ENCODE measurements at regions of chr12 and their contacts with region 1.

Region 1: GRCh38 chr12:105801351-105801750 is 337.4 kb downstream of the NUAK1 start:
- DNase-seq: no peak
- ATAC-seq: no peak
- H3K4me3 ChIP-seq: no peak overlapping the region
- H3K27ac ChIP-seq: no peak overlapping the region
- H3K4me1 ChIP-seq: no peaks in the 10 kb centered on the region
- H3K27me3 ChIP-seq: no peaks in the 10 kb centered on the region
- CTCF ChIP-seq: no peak

Region 2: DNA sequence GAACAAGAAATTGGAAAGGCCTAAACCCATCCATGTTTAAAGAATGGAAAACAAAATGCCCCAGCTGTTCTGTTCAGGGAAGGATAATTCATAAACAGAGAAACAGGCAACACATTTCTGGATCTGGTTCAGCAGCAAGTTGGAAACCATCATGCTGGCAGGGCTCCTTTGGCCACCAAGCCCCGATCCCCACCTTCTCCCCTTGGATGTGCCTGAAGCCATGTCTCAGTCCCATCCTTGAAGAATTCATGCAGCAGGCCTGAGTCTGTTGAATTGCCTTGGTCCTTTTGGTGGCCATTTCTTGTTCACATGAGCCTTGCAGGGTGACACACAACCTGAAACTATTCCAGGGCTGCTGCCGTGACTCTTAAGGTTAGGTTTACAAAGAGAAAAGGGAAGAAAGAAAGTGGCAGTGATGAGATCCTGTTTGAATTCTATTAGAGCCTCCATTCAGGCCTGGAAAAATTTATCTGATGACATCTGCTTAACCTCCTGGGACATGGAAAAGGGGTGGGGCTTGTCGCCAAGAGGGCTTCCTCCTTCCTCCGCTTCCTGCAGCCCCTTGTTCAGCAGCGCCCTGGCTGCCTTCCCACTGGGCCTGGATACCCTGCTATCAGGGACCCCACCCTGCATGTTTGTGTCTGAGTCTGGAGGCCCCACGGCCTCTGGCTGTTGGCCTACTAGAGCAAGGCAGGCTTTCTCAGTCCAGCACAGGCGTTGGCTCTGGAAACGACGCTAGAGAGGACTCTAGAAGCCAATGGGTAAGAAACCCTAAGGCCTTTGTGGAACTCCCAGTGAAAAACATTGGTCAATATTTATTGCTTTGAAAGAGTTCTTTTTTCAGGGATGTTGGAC is 129.0 kb before region 1 on chr12:
- CTCF ChIA-PET with region 1: no interaction called
- POLR2A ChIA-PET with region 1: interaction called, 12 read pairs
- in situ Hi-C with region 1: no loop called
- intact Hi-C with region 1: no loop called
- DNase-seq: no peak
- ATAC-seq: no peak
- H3K4me3 ChIP-seq: no peak overlapping the region
- H3K27ac ChIP-seq: no peak overlapping the region
- H3K4me1 ChIP-seq: no peaks in the 10 kb centered on the region
- H3K27me3 ChIP-seq: no peaks in the 10 kb centered on the region
- CTCF ChIP-seq: no peak

Region 3: DNA sequence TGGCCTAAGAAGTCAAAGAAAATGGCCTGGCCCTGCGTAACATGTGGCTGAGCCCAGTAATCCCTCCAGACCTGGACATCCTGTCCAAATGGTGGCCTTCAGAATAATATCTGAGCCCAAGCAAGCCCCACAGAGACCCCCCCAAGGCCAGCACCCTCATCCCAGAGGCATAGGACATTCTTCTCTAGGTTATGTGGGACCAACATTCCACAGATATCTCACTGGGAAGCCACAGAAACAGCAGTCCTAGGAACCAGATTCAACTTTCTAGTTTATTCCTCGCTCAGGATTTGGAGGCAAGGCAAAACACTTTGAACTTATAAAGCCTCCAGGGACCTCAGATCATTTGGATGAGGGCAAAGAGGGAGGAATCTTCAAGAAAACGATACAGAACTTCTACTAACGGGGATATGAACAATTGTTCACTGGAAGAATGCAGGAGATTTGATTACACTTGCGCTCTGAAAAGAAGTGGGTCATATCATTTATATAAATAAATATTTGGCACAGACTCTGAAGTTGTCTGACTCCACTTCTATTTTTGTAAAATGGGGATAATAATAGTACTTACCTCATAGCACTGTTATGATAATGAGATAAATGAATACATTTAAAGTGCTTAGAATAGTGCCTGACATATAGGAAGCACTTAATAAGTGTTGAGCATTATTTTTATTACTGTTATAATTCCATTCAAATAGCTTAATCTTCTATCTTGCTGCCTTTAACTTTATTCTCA is 165.9 kb after region 1 on chr12:
- CTCF ChIA-PET with region 1: no interaction called
- POLR2A ChIA-PET with region 1: no interaction called
- in situ Hi-C with region 1: no loop called
- intact Hi-C with region 1: no loop called
- DNase-seq: no peak
- ATAC-seq: no peak
- H3K4me3 ChIP-seq: no peak overlapping the region
- H3K27ac ChIP-seq: no peak overlapping the region
- H3K4me1 ChIP-seq: no peaks in the 10 kb centered on the region
- H3K27me3 ChIP-seq: no peaks in the 10 kb centered on the region
- CTCF ChIP-seq: no peak